Breast epithelium (tissue), 4 donors: ENCODE measurements at regions of chr20 and their contacts with region 1.

Region 1: GRCh38 chr20:20321917-20322316 is 46.0 kb upstream of the INSM1 start:
- DNase-seq: no peak
- H3K4me3 ChIP-seq: no peak overlapping the region
- H3K27ac ChIP-seq: no peak overlapping the region
- H3K4me1 ChIP-seq: no peaks in the 10 kb centered on the region
- H3K27me3 ChIP-seq: no peaks in the 10 kb centered on the region
- CTCF ChIP-seq: no peak
- POLR2A ChIP-seq: no peak

Region 2: GRCh38 chr20:20192401-20193182 is 129.3 kb before region 1 on chr20:
- intact Hi-C with region 1: loop called (anchors 5 kb)
- DNase-seq: no peak
- H3K4me3 ChIP-seq: no peak overlapping the region
- H3K27ac ChIP-seq: no peak overlapping the region
- H3K4me1 ChIP-seq: no peaks in the 10 kb centered on the region
- H3K27me3 ChIP-seq: no peaks in the 10 kb centered on the region
- CTCF ChIP-seq: no peak
- POLR2A ChIP-seq: no peak

Region 3: DNA sequence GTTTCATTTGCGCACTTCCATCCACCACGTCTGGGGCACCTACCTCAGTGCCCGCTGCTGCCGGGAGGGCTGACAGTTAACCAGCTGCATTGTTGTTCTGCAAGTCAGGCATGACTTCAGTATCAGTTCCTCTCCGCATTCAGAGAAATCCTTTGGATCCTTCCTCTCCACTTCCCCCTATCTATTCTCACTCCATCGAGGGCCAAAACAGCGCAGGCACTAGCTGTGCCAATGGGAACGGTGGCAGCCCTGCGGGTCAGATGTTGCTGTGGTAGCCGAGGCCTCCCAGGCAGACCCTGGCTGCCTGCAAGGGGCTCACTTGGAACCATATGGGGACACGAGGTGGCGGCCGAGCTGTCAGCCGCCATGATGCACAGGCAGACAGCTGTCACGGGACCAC is 18.2 kb before region 1 on chr20:
- intact Hi-C with region 1: no loop called
- DNase-seq: no peak
- H3K4me3 ChIP-seq: no peak overlapping the region
- H3K27ac ChIP-seq: no peak overlapping the region
- H3K4me1 ChIP-seq: no peaks in the 10 kb centered on the region
- H3K27me3 ChIP-seq: no peaks in the 10 kb centered on the region
- CTCF ChIP-seq: no peak
- POLR2A ChIP-seq: no peak

Region 4: DNA sequence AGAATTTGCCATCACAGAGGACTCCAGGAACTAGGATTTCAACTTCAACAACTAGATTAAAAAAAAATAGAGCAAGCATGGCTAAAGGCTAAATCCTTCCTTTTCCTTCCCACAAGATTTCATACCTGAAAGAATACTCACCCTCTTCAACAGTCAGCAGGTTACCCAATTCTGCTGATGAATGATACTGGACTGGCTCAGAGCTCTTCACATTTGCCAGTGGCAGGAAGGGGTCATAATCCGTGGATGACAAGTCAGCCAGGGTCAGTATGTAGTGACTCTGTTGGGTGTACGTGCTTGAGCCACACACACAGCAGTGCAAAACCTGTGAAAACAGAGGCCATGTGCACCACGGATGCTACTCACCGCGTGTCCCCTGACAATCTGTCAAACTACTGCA is 198.9 kb after region 1 on chr20:
- intact Hi-C with region 1: no loop called
- DNase-seq: no peak
- H3K4me3 ChIP-seq: no peak overlapping the region
- H3K27ac ChIP-seq: no peak overlapping the region
- H3K4me1 ChIP-seq: no peaks in the 10 kb centered on the region
- H3K27me3 ChIP-seq: no peaks in the 10 kb centered on the region
- CTCF ChIP-seq: no peak
- POLR2A ChIP-seq: no peak